Cardiac septum (tissue), 1 donor: ENCODE measurements at regions of chr14 and their contacts with region 1.

Region 1: GRCh38 chr14:75982266-75983018 is 647 bp upstream of the TGFB3 start:
- DNase-seq: peak; percentile 90

Region 2: GRCh38 chr14:75794615-75795038 is 187.8 kb before region 1 on chr14:
- intact Hi-C with region 1: loop called (anchors 2 kb)
- DNase-seq: no peak

Region 3: DNA sequence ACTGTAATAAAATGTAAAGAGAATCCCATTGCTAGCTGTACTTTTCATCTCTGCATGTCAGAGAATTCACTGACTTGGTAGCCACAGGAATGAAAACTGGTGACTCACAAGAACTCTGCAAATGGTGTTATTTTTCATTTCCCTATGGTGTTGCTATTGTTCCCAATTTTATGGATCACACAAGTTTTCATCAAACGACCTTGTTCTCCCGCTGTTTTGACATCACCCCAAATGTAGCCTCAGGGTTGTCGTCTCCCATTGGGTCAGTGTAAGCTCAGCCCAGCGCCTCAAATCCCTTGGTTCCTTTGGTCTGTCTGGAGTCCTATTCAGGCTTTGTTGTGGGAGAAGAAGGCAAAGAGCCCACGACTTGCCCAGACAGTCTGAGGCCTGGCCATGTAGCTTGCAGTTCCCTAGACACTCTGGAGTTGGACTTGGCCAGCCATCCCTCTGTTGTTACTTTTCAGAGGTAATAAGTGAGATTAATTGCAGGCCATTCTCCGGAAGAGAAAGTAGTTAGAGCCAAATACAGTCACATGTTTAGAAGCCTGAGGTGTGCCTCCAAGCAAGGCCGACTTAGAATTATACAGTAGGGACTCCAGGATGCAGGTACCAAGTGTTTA is 159.8 kb before region 1 on chr14:
- intact Hi-C with region 1: loop called (anchors 10 kb)
- DNase-seq: no peak

Region 4: DNA sequence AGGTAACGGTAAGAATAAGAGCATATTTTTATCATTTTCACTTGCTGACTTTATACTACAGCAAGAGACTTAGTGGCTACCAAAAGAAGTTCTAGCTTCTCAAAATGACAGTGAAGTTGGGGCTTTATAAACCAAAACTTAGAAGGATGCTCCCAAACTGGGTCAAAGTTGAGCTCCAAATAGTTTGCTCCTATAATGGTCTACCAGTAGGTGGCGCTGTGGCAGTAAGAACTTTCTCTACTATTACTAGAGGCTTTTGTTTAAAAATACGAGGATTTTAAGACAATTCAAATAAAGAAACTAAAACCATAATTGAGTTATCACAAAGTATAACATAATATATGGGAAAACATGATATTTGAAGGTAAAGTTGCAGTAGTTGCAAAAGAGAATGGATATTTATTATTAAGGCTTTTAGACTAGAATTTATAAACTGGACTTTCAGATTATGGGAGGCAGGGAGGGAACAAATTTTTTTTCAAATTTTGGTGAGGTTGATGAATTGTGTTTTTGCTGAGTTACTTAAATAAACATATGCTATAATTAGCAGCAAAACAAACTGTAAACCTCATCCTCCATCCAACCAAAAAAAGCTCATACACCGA is 75.7 kb before region 1 on chr14:
- intact Hi-C with region 1: loop called (anchors 2 kb)
- DNase-seq: no peak

Region 5: DNA sequence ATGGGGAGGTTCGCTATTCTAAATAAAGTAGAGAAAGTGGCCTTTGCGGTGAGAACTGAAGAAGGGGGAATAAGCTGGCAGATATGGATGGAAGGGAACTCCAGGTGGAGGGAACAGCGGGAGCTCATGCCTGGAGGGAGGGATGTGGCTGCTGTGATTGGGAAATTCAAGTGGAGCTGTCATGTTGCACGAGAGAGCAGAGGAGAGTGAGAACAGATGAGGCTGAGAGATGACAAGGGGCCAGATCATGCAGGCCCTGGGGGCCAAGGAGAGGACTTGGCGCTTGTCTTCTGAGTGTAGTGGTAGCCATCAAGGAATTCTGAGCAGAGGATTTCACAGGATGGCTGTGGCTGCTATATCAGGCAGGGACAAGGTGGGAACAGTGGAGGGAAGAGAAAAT is 35.7 kb before region 1 on chr14:
- intact Hi-C with region 1: no loop called
- DNase-seq: no peak

Region 6: GRCh38 chr14:76012354-76012753 is 29.9 kb after region 1 on chr14:
- intact Hi-C with region 1: no loop called
- DNase-seq: no peak

Region 7: GRCh38 chr14:76151398-76152339 is 169.2 kb after region 1 on chr14 and contains the start of gene GPATCH2L:
- intact Hi-C with region 1: no loop called
- DNase-seq: peak; percentile 97
- total RNA-seq, gene GPATCH2L: 33.2 TPM